ENCODE measurements at regions of chr2 and their contacts with region 1.

Region 1: DNA sequence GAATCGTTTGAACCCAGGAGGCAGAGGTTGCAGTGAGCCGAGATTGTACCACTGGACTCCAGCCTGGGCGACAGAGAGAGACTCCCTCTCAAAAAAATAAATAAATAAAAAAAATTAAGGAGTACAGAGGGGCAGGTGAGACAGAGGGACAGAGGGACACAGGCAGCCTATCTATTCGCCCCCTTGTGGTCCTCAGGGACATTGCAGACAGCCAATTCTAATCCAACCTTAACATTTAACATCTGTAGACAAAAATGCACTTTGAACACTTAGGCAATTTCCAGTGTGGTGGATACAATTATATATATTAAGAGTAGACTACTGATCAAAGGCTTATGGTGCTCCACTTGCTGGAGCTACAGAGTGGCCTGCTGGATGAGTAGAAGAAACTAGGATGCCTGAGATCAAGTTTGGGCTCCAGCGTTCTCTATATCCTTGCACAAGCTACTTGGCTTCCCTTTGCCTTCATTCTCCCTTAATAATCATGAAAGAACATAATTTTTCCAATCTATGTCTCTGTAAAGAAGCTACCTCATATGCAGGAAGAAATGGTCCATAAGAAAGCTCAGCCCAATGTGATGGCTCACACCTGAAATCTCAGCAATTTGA is 8.2 kb upstream of the SMARCAL1 start:
- DNase-seq: peak; percentile 71
- H3K4me3 Mint-ChIP-seq: no peak overlapping the region
- H3K27ac Mint-ChIP-seq: no peak overlapping the region
- H3K4me1 Mint-ChIP-seq: no peaks in the 10 kb centered on the region
- H3K27me3 Mint-ChIP-seq: no peaks in the 10 kb centered on the region

Region 2: GRCh38 chr2:215982080-215982875 is 421.8 kb before region 1 on chr2:
- CTCF ChIA-PET with region 1: no interaction called
- intact Hi-C with region 1: no loop called
- DNase-seq: peak; percentile 19
- H3K4me3 Mint-ChIP-seq: no peak overlapping the region
- H3K27ac Mint-ChIP-seq: no peak overlapping the region
- H3K4me1 Mint-ChIP-seq: peaks cover 4% of the 10 kb centered on the region
- H3K27me3 Mint-ChIP-seq: no peaks in the 10 kb centered on the region

Region 3: DNA sequence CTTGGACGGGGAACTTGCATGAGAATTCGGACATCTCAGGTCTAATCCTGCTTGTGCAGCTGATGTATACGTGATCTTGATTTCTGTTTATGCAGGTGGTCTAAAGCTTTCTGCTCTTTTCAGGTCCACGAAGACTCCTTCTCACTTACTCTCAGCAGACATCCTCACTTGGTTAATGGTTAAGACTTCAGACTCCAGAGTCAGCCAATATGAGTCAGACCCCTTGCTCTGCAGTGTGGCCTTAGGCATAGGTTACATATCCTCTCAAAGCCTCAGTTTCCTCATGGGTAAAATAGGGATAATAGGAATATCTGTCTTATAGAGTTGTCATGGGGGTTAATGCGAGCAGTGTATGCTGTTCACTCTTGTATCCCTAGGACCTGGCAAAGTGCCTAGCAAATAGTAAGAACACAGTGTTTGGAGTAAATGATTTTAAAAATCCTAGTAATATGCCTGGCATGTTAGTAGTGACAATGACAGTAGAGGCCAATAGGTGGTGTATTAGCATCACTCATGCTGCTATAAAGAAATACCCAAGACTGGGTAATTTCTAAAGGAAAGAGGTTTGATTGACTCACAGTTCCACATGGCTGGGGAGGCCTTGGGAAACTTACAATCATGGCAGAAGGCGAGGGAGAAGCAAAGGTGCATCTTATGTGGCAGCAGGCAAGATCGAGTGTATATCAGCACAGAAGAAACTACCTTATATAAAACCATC is 252.6 kb before region 1 on chr2:
- CTCF ChIA-PET with region 1: interaction called, 7 read pairs
- intact Hi-C with region 1: loop called (anchors 1 kb)
- DNase-seq: no peak
- H3K4me3 Mint-ChIP-seq: no peak overlapping the region
- H3K27ac Mint-ChIP-seq: no peak overlapping the region
- H3K4me1 Mint-ChIP-seq: peaks cover 25% of the 10 kb centered on the region
- H3K27me3 Mint-ChIP-seq: no peaks in the 10 kb centered on the region

Region 4: DNA sequence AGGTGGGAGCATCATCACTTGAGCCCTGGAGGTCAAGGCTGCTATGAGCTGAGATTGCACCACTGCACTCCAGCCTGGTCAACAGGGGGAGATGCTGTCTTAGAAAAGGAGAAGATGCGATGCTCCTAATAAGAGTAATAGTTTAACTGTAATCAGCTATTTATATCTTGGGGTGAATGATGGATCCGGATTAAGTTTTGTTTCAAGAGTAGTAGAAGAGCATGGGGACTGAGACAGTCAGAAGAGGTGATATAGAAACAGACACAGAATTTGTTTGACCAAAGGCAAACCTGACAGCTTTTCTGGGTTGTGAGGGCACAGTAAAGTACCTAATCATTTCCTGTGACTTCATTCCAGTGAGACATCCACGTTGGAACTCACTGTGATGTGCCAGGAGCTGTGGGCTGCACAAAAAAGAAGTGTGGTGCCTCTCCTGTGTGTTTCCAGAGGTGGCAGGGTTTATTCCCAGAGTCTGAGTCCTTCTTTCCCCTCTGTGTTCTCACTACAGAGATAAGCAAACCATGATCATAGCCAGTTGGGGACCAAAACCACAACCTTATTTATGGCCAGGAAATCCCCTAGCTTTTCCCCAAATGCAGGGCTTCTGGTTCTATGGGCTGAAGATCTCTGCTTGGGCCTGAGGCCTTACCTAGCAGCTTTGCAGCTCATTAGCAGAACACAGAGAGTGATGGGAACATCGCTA is 181.3 kb before region 1 on chr2:
- CTCF ChIA-PET with region 1: interaction called, 43 read pairs
- intact Hi-C with region 1: loop called (anchors 2 kb)
- DNase-seq: peak; percentile 56
- H3K4me3 Mint-ChIP-seq: no peak overlapping the region
- H3K27ac Mint-ChIP-seq: peak overlapping the region; percentile 41
- H3K4me1 Mint-ChIP-seq: peaks cover 28% of the 10 kb centered on the region
- H3K27me3 Mint-ChIP-seq: no peaks in the 10 kb centered on the region

Region 5: DNA sequence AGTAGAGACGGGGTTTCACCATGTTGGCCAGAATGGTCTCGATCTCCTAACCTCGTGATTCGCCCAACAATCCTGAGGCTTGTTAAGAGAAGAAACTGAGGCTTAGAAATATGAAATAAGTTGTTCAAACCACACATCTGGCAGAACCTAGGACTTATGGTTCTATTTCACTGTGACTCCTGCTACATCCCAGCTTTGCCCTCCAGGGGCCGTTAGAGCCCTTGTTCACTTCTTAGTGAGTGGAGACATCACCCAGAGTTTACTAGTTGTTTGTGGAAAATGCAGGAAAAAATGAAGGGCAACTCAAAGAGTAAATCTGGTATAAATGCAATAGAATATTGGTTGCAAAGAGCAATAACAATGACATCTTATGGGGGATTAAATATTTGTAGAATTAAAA is 75.8 kb before region 1 on chr2:
- CTCF ChIA-PET with region 1: interaction called, 13 read pairs
- intact Hi-C with region 1: loop called (anchors 5 kb)
- DNase-seq: peak; percentile 19
- H3K4me3 Mint-ChIP-seq: no peak overlapping the region
- H3K27ac Mint-ChIP-seq: no peak overlapping the region
- H3K4me1 Mint-ChIP-seq: no peaks in the 10 kb centered on the region
- H3K27me3 Mint-ChIP-seq: no peaks in the 10 kb centered on the region

Region 6: GRCh38 chr2:216371756-216372702 is 32.1 kb before region 1 on chr2 and contains the start of gene MARCHF4:
- CTCF ChIA-PET with region 1: interaction called, 7 read pairs
- intact Hi-C with region 1: loop called (anchors 2 kb)
- DNase-seq: peak; percentile 76
- H3K4me3 Mint-ChIP-seq: no peak within 1 kb of the TSS
- H3K27ac Mint-ChIP-seq: no peak within 1 kb of the TSS
- H3K4me1 Mint-ChIP-seq: peaks cover 15% of the 10 kb centered on the region
- H3K27me3 Mint-ChIP-seq: peaks cover 34% of the 10 kb centered on the region
- total RNA-seq, gene MARCHF4: not detected

Region 7: GRCh38 chr2:217622205-217623060 is 1218.3 kb after region 1 on chr2:
- CTCF ChIA-PET with region 1: no interaction called
- intact Hi-C with region 1: no loop called
- DNase-seq: no peak
- H3K4me3 Mint-ChIP-seq: no peak overlapping the region
- H3K27ac Mint-ChIP-seq: no peak overlapping the region
- H3K4me1 Mint-ChIP-seq: no peaks in the 10 kb centered on the region
- H3K27me3 Mint-ChIP-seq: no peaks in the 10 kb centered on the region

Measured in activated naive CD4-positive, alpha-beta T cell treated with anti-CD3 and anti-CD28 coated beads for 36 hours (primary cell).